Thyroid gland (tissue), 4 donors: ENCODE measurements at regions of chr17 and their contacts with region 1.

Region 1: DNA sequence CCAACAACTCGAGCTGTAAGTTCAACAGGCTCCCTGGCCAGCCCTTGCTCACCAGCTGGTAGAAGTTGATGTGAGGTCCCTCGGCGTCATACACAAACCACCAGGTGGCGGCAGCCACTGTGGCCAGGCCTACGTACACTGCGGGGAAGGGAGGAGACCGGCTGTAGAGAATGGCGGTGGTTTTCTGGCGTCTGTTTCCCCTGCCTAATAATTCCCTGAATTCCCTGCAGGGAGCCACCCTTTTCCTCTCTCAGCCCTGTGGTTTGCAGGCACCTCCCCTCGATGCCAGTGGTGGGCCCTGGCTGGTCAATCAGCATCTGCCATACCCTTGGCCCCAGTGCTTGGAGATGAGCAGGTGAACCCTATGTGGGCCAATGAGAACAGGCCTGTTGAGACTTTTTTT is 18.9 kb upstream of the P2RX1 start:
- DNase-seq: peak; percentile 80 to 83
- H3K4me3 ChIP-seq: no peak overlapping the region
- H3K27ac ChIP-seq: no peak overlapping the region
- H3K4me1 ChIP-seq: no peaks in the 10 kb centered on the region
- H3K27me3 ChIP-seq: no peaks in the 10 kb centered on the region
- CTCF ChIP-seq: peak; percentile 31 to 78 (median 72)
- POLR2A ChIP-seq: no peak

Region 2: GRCh38 chr17:4004517-4005295 is 69.6 kb after region 1 on chr17:
- intact Hi-C with region 1: loop called (anchors 5 kb)
- DNase-seq: peak; percentile 43 to 54
- H3K4me3 ChIP-seq: no peak overlapping the region
- H3K27ac ChIP-seq: no peak overlapping the region
- H3K4me1 ChIP-seq: no peaks in the 10 kb centered on the region
- H3K27me3 ChIP-seq: no peaks in the 10 kb centered on the region
- CTCF ChIP-seq: peak; percentile 64 to 94 (median 78)
- POLR2A ChIP-seq: no peak

Region 3: DNA sequence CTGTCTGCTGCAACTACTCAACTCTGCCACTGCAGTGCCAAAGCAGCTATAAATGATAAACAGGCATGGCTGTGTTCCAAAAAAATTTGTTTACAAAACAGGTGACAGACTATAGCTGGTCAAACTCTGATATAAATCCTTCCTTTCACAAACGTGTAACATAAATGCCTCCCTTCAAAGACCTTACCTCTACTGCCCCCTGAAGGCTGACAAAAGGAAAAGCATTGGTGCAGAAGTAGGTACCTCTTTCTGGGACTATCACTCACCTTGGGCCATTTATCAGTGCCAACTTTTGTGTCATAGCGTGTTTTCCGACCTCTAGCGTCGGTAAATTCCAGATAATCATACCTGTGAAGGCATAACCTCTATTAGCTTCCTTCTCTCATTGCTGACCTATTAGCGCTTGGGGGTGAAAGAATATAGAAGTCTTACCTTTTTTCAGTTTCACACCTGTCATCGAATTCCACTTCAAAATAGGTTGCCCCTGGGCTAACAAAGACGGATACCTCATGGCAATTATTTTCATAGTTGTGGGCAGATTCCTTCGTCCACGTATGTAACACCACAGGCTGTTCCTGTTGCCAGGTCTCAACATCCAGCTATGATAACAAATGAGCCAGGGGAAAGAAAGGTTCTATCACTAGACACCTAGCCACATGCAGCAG is 139.8 kb after region 1 on chr17:
- intact Hi-C with region 1: loop called (anchors 10 kb)
- DNase-seq: no peak
- H3K4me3 ChIP-seq: no peak overlapping the region
- H3K27ac ChIP-seq: no peak overlapping the region
- H3K4me1 ChIP-seq: no peaks in the 10 kb centered on the region
- H3K27me3 ChIP-seq: no peaks in the 10 kb centered on the region
- CTCF ChIP-seq: peak in 4 of 6 experiments; percentile 39 to 55 (median 45)
- POLR2A ChIP-seq: no peak